Naive thymus-derived CD4-positive, alpha-beta T cell (primary cell): ENCODE measurements at regions of chr4 and their contacts with region 1.

Region 1: DNA sequence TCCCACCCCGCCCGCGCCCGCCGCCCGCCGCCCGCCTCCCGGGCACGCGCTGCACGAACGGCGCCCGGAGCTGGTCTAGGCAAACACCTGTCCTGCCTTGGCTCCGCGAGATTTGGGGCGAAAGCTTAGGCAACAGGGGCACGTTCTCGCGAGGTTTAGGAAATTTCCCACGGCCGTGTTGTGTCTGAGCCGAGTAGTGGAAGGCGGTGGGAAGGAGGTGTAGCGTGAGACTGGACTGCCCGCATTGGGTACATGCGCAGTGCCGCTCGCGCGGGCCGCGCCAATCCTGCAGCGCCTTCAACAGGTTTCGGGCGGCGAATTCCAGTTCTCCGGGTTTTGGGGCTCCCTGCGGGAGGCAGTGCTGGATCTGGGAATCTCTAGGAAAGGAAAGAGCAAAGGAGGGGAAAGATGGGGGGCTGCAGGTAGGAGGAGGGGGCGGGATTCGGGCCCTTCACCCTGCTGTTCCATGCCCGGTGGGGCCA is 1.3 kb upstream of the RBPJ start:
- DNase-seq: peak; percentile 88 to 96 (median 94)
- ATAC-seq: peak; percentile 77
- H3K4me3 ChIP-seq: peak overlapping the region; percentile 89
- H3K4me3 Mint-ChIP-seq: peak overlapping the region; percentile 89 to 100 (median 96)
- H3K27ac ChIP-seq: peak overlapping the region; percentile 84
- H3K27ac Mint-ChIP-seq: peak overlapping the region; percentile 92 to 100 (median 96)
- H3K4me1 ChIP-seq: peaks cover 10 to 14% of the 10 kb centered on the region in 2 donors
- H3K4me1 Mint-ChIP-seq: peaks cover 34 to 43% (median 36%) of the 10 kb centered on the region in 7 donors
- H3K27me3 ChIP-seq: no peaks in the 10 kb centered on the region
- H3K27me3 Mint-ChIP-seq: no peaks in the 10 kb centered on the region

Region 2: GRCh38 chr4:25159884-25160713 is 1159.4 kb before region 1 on chr4 and contains the start of gene SEPSECS:
- CTCF ChIA-PET with region 1: no interaction called
- POLR2A ChIA-PET with region 1: no interaction called
- intact Hi-C with region 1: loop called (anchors 2 kb)
- DNase-seq: peak; percentile 82 to 96 (median 94)
- ATAC-seq: peak; percentile 89
- H3K4me3 ChIP-seq: peak within 1 kb of the TSS; percentile 75
- H3K4me3 Mint-ChIP-seq: peak within 1 kb of the TSS; percentile 87 to 97 (median 94)
- H3K27ac ChIP-seq: peak within 1 kb of the TSS; percentile 97
- H3K27ac Mint-ChIP-seq: peak within 1 kb of the TSS; percentile 93 to 98 (median 96)
- H3K4me1 ChIP-seq: peaks cover 4 to 14% of the 10 kb centered on the region in 2 donors
- H3K4me1 Mint-ChIP-seq: peaks cover 33 to 66% (median 52%) of the 10 kb centered on the region in 7 donors
- H3K27me3 ChIP-seq: no peaks in the 10 kb centered on the region
- H3K27me3 Mint-ChIP-seq: peaks cover 0 to 2% (median 0%) of the 10 kb centered on the region in 5 donors
- total RNA-seq, gene SEPSECS: 14.4 to 25.0 (median 17.2) TPM

Region 3: GRCh38 chr4:25312496-25313200 is 1006.9 kb before region 1 on chr4 and contains the start of gene ZCCHC4:
- CTCF ChIA-PET with region 1: no interaction called
- POLR2A ChIA-PET with region 1: no interaction called
- intact Hi-C with region 1: loop called (anchors 1 to 2 kb)
- DNase-seq: peak; percentile 83 to 99 (median 92)
- ATAC-seq: peak; percentile 100
- H3K4me3 ChIP-seq: peak within 1 kb of the TSS; percentile 80
- H3K4me3 Mint-ChIP-seq: peak within 1 kb of the TSS; percentile 91 to 100 (median 98)
- H3K27ac ChIP-seq: peak within 1 kb of the TSS; percentile 71
- H3K27ac Mint-ChIP-seq: peak within 1 kb of the TSS; percentile 90 to 98 (median 95)
- H3K4me1 ChIP-seq: peaks cover 5 to 7% of the 10 kb centered on the region in 2 donors
- H3K4me1 Mint-ChIP-seq: peaks cover 11 to 34% (median 29%) of the 10 kb centered on the region in 7 donors
- H3K27me3 ChIP-seq: no peaks in the 10 kb centered on the region
- H3K27me3 Mint-ChIP-seq: peaks cover 0 to 10% (median 4%) of the 10 kb centered on the region in 5 donors
- total RNA-seq, gene ZCCHC4: 9.5 to 15.5 (median 13.6) TPM

Region 4: DNA sequence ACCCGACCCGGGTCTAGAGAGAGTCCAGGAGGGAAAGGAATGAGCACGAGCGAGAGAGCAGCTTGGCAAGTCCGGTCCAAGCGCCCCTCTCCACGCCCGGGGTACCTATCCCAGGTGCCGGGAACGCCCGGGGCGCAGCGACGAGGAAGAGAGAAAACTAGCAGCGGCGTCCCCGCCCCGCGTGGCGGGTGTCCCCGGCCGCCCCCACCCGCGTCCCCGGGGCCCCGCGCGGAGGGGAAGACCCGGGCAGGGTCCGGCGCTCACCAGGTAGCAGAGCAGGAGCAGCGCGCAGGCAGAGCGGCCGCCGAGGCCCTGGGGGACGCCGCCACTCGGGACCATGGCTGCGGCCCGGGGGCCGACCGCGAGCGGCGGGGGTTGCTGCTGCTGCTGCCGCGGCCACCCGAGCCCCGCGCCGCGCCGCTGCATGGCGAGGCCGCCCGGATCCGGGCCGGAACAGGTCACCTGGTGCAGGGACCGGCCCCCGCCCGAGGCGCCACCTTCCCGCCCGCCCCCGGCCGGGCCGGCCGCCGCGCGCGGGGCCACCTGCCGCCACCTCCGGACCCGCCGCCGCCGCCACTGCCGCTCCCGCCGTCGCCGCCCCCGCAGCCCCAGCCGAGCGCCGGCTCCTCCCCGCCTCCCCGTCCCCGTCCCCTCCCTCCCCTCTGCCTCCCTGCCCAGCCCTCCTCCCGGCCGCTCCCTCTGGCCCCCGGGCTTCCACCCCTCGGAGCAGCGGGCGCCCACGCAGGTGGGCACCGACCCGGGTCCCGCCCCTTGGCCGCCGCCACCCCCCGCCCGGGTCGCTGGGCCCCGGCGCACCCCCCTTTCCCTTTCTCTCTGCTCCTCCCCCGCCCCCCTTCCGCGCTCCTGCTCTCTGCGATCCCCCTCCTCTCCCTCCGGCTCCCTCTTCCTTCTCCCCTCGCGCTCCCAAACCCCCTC is 456.8 kb before region 1 on chr4 and contains the start of gene SEL1L3:
- CTCF ChIA-PET with region 1: no interaction called
- POLR2A ChIA-PET with region 1: interaction called, 6 read pairs
- intact Hi-C with region 1: loop called (anchors 1 to 2 kb)
- DNase-seq: peak in 8 of 9 donors; percentile 13 to 77 (median 29)
- ATAC-seq: peak; percentile 59
- H3K4me3 ChIP-seq: peak within 1 kb of the TSS; percentile 68
- H3K4me3 Mint-ChIP-seq: peak within 1 kb of the TSS; percentile 94 to 100 (median 98)
- H3K27ac ChIP-seq: peak within 1 kb of the TSS; percentile 71
- H3K27ac Mint-ChIP-seq: peak within 1 kb of the TSS; percentile 88 to 99 (median 96)
- H3K4me1 ChIP-seq: peaks cover 30 to 32% of the 10 kb centered on the region in 2 donors
- H3K4me1 Mint-ChIP-seq: peaks cover 32 to 44% (median 39%) of the 10 kb centered on the region in 7 donors
- H3K27me3 ChIP-seq: no peaks in the 10 kb centered on the region
- H3K27me3 Mint-ChIP-seq: peaks cover 0 to 3% (median 0%) of the 10 kb centered on the region in 5 donors
- total RNA-seq, gene SEL1L3: 38.1 to 55.8 (median 47.0) TPM

Region 5: DNA sequence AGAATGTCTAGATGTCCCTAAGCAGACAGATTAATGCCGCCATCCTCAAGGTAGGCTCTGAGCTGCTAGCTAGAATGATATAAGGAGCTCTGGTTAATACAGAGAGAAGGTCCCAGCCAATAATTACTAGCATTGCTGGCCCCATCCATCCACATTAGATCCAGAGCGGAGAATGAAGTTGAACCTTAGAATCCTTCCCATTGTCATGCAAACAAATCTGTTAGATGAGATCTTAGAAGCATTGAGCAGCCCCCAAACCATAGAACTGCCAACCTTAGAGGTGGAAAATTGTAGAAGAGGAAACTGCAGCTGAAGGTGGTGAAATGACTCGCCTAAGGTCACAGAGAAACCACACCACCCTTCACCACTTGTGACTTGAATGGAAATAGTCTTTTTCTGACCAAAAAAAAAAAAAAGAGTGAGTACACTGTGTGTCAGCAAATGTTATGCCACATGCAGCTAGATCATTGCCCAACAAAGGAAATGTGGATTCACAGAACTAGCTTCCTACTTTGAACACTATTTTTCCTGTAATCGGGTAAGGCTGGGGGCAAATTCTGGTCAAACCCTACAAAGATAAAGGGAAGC is 243.4 kb before region 1 on chr4:
- CTCF ChIA-PET with region 1: interaction called, 6 read pairs
- POLR2A ChIA-PET with region 1: no interaction called
- intact Hi-C with region 1: loop called in 1 of 2 experiments (anchors 1 kb)
- DNase-seq: peak in 1 of 9 donors; percentile 53
- ATAC-seq: peak; percentile 77
- H3K4me3 ChIP-seq: no peak overlapping the region
- H3K4me3 Mint-ChIP-seq: peak overlapping the region in 1 of 10 donors; percentile 63
- H3K27ac ChIP-seq: no peak overlapping the region
- H3K27ac Mint-ChIP-seq: peak overlapping the region in 1 of 9 donors; percentile 91
- H3K4me1 ChIP-seq: peaks cover 0 to 15% of the 10 kb centered on the region in 2 donors
- H3K4me1 Mint-ChIP-seq: peaks cover 3 to 63% (median 14%) of the 10 kb centered on the region in 7 donors
- H3K27me3 ChIP-seq: no peaks in the 10 kb centered on the region
- H3K27me3 Mint-ChIP-seq: peaks cover 0 to 15% (median 0%) of the 10 kb centered on the region in 5 donors

Region 6: GRCh38 chr4:26197018-26197779 is 122.3 kb before region 1 on chr4:
- CTCF ChIA-PET with region 1: interaction called, 3 read pairs
- POLR2A ChIA-PET with region 1: interaction called, 4 read pairs
- intact Hi-C with region 1: loop called (anchors 1 kb)
- DNase-seq: peak in 5 of 9 donors; percentile 1 to 74 (median 6)
- ATAC-seq: peak; percentile 78
- H3K4me3 ChIP-seq: peak overlapping the region; percentile 31
- H3K4me3 Mint-ChIP-seq: peak overlapping the region in 9 of 10 donors; percentile 21 to 82 (median 63)
- H3K27ac ChIP-seq: peak overlapping the region; percentile 38
- H3K27ac Mint-ChIP-seq: peak overlapping the region in 8 of 9 donors; percentile 42 to 95 (median 80)
- H3K4me1 ChIP-seq: peaks cover 17 to 37% of the 10 kb centered on the region in 2 donors
- H3K4me1 Mint-ChIP-seq: peaks cover 18 to 80% (median 30%) of the 10 kb centered on the region in 7 donors
- H3K27me3 ChIP-seq: no peaks in the 10 kb centered on the region
- H3K27me3 Mint-ChIP-seq: no peaks in the 10 kb centered on the region

Region 7: GRCh38 chr4:26299254-26299882 is 20.1 kb before region 1 on chr4:
- CTCF ChIA-PET with region 1: no interaction called
- POLR2A ChIA-PET with region 1: no interaction called
- intact Hi-C with region 1: no loop called
- DNase-seq: no peak
- ATAC-seq: no peak
- H3K4me3 ChIP-seq: no peak overlapping the region
- H3K4me3 Mint-ChIP-seq: peak overlapping the region in 1 of 10 donors; percentile 21
- H3K27ac ChIP-seq: no peak overlapping the region
- H3K27ac Mint-ChIP-seq: peak overlapping the region in 1 of 9 donors; percentile 44
- H3K4me1 ChIP-seq: no peaks in the 10 kb centered on the region
- H3K4me1 Mint-ChIP-seq: peaks cover 0 to 35% (median 0%) of the 10 kb centered on the region in 7 donors
- H3K27me3 ChIP-seq: no peaks in the 10 kb centered on the region
- H3K27me3 Mint-ChIP-seq: peaks cover 0 to 7% (median 0%) of the 10 kb centered on the region in 5 donors

Region 8: DNA sequence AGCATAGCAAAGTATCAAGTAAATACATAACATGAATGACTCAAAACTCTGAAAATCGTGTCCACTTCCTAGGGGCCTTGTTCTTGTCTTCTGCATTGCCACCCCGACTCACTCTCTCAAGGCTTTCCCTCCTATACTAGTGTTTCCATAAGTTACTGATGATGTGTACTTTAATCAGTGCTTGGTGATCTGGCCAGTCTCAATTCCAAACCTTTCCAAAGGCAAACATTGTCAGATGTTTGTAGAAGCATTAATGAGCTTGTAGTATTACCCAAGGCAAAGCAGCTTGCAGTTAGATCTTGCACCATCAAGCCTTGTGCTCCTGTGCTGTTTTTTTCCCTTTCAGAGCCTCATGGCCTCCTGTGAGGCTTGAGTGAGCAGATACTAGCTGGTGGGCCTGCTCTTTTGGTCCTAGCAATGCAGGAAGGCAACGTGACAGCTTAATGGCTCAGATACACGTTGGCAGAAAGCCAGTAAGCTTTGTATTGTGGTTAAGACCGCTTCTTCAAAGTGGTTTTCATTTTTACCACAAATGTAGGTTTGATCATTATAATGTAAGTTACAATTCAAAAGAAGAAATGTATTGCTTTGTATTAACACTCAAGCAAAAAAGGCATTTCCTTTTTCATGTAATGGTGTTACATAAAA is 53.1 kb after region 1 on chr4:
- CTCF ChIA-PET with region 1: no interaction called
- POLR2A ChIA-PET with region 1: no interaction called
- intact Hi-C with region 1: no loop called
- DNase-seq: peak in 8 of 9 donors; percentile 23 to 70 (median 58)
- ATAC-seq: peak; percentile 78
- H3K4me3 ChIP-seq: no peak overlapping the region
- H3K4me3 Mint-ChIP-seq: peak overlapping the region in 7 of 10 donors; percentile 2 to 70 (median 21)
- H3K27ac ChIP-seq: no peak overlapping the region
- H3K27ac Mint-ChIP-seq: peak overlapping the region in 4 of 9 donors; percentile 2 to 32 (median 16)
- H3K4me1 ChIP-seq: peaks cover 16% of the 10 kb centered on the region in 2 donors
- H3K4me1 Mint-ChIP-seq: peaks cover 34 to 66% (median 55%) of the 10 kb centered on the region in 7 donors
- H3K27me3 ChIP-seq: no peaks in the 10 kb centered on the region
- H3K27me3 Mint-ChIP-seq: peaks cover 0 to 6% (median 0%) of the 10 kb centered on the region in 5 donors

Region 9: GRCh38 chr4:26583865-26584652 is 264.6 kb after region 1 on chr4 and contains the start of gene TBC1D19:
- CTCF ChIA-PET with region 1: interaction called, 4 read pairs
- POLR2A ChIA-PET with region 1: interaction called, 9 read pairs
- intact Hi-C with region 1: loop called (anchors 1 to 2 kb)
- DNase-seq: peak; percentile 77 to 92 (median 87)
- ATAC-seq: peak; percentile 96
- H3K4me3 ChIP-seq: peak within 1 kb of the TSS; percentile 83
- H3K4me3 Mint-ChIP-seq: peak within 1 kb of the TSS; percentile 86 to 98 (median 95)
- H3K27ac ChIP-seq: peak within 1 kb of the TSS; percentile 92
- H3K27ac Mint-ChIP-seq: peak within 1 kb of the TSS; percentile 96 to 100 (median 98)
- H3K4me1 ChIP-seq: peaks cover 10 to 11% of the 10 kb centered on the region in 2 donors
- H3K4me1 Mint-ChIP-seq: peaks cover 10 to 51% (median 28%) of the 10 kb centered on the region in 7 donors
- H3K27me3 ChIP-seq: no peaks in the 10 kb centered on the region
- H3K27me3 Mint-ChIP-seq: peaks cover 0 to 5% (median 0%) of the 10 kb centered on the region in 5 donors
- total RNA-seq, gene TBC1D19: 4.9 to 8.7 (median 6.4) TPM